ENCODE measurements at regions of chr2 and their contacts with region 1.

Region 1: GRCh38 chr2:218568190-218569037 is at the starts of genes CNOT9 and USP37:
- DNase-seq: peak; percentile 98
- H3K4me3 Mint-ChIP-seq: peak within 1 kb of the TSS; percentile 92
- H3K27ac Mint-ChIP-seq: peak within 1 kb of the TSS; percentile 86
- H3K4me1 Mint-ChIP-seq: peaks cover 40% of the 10 kb centered on the region
- H3K27me3 Mint-ChIP-seq: no peaks in the 10 kb centered on the region
- CTCF ChIP-seq: no peak
- total RNA-seq, gene CNOT9: 64.9 and 66.1 TPM in 2 replicates
- total RNA-seq, gene USP37: 11.6 and 16.4 TPM in 2 replicates

Region 2: DNA sequence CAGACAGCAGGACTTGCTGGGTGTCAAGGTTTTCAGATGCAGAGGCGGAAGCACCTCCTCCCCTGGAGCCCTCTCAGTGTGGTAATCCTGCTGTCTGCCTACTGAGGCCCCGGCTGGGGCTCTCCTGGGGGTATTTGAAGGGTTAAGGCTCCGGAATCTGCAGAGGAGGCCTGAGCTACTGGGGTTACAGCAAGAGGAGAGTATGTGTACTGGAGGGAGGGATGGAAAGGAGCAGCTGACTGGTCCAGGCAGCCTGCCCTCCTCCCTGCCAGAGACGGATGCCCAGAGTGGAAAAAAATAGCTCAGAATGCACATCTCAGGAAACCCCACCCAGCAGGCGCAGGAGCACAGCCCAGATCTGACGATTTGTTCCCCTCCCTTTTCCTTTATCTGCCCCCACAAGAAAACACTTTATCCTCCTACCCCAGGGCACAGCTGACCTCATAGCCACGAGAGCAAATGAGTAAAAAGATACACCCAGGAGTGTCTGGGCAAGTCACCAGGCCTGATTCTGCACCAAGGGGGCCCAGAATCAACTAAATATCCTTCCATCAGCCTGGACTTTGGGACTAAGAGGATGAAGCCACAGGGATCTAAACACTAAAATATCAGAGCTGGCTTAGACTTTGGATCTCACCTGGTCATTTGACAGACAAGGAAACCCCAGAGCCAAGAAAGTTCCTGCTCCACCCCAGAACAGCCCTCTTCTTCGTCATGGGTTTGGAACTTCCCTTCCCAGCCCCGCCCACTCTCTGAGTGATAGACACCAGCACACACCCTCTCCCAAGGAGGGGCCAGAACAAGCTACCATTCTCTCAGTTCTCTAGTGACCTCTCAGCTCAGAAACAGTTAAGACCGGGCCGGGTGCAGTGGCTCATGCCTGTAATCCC is 281.6 kb before region 1 on chr2:
- CTCF ChIA-PET with region 1: no interaction called
- POLR2A ChIA-PET with region 1: interaction called, 10 read pairs
- intact Hi-C with region 1: no loop called
- DNase-seq: peak; percentile 97
- H3K4me3 Mint-ChIP-seq: peak overlapping the region; percentile 80
- H3K27ac Mint-ChIP-seq: peak overlapping the region; percentile 99
- H3K4me1 Mint-ChIP-seq: peaks cover 57% of the 10 kb centered on the region
- H3K27me3 Mint-ChIP-seq: no peaks in the 10 kb centered on the region
- CTCF ChIP-seq: no peak

Region 3: DNA sequence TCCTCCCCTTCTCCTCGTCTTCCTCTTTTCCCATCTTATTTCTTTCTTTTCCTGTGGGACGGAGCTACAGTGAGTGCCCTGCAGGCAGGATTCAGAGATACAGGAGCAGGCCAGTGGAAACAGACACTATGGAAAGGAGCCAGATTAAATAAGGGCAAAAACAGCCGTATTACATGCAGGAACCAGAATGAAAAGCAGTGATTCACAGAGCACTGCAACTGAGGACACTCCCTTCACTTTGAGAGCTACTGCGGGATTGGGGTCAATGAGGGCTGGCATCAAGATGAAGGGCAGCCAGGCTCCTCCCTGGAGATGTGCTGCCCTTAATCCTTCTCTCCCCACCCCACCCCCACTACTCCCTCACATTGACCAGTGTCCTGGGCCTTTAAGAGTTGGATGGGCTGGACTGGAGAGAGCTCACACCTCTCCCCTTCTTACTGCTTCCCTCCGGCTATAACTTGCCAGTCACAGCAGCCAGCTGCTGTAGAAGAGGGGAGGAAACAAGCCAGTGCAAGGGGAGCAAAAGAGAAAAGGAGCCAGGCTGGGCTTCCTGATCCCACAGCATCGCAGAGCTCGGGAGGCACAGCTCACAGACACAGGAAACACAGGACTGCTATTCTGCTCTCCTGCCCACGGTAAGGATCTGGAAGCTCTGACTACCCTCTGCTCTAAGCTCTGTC is 39.2 kb after region 1 on chr2 and contains the start of gene PLCD4:
- CTCF ChIA-PET with region 1: no interaction called
- POLR2A ChIA-PET with region 1: interaction called, 10 read pairs
- intact Hi-C with region 1: no loop called
- DNase-seq: peak; percentile 79
- H3K4me3 Mint-ChIP-seq: peak within 1 kb of the TSS; percentile 36
- H3K27ac Mint-ChIP-seq: peak within 1 kb of the TSS; percentile 92
- H3K4me1 Mint-ChIP-seq: peaks cover 32% of the 10 kb centered on the region
- H3K27me3 Mint-ChIP-seq: no peaks in the 10 kb centered on the region
- CTCF ChIP-seq: no peak
- total RNA-seq, gene PLCD4: 0.40 and 0.86 TPM in 2 replicates

Region 4: GRCh38 chr2:218648088-218648786 is 79.8 kb after region 1 on chr2:
- CTCF ChIA-PET with region 1: interaction called, 3 read pairs
- POLR2A ChIA-PET with region 1: no interaction called
- intact Hi-C with region 1: loop called (anchors 2 kb)
- DNase-seq: peak; percentile 68
- H3K4me3 Mint-ChIP-seq: no peak overlapping the region
- H3K27ac Mint-ChIP-seq: no peak overlapping the region
- H3K4me1 Mint-ChIP-seq: no peaks in the 10 kb centered on the region
- H3K27me3 Mint-ChIP-seq: no peaks in the 10 kb centered on the region
- CTCF ChIP-seq: peak; percentile 67

Measured in MCF 10A (cell line).